OCI-LY7 (cell line): ENCODE measurements at regions of chr14 and their contacts with region 1.

Region 1: DNA sequence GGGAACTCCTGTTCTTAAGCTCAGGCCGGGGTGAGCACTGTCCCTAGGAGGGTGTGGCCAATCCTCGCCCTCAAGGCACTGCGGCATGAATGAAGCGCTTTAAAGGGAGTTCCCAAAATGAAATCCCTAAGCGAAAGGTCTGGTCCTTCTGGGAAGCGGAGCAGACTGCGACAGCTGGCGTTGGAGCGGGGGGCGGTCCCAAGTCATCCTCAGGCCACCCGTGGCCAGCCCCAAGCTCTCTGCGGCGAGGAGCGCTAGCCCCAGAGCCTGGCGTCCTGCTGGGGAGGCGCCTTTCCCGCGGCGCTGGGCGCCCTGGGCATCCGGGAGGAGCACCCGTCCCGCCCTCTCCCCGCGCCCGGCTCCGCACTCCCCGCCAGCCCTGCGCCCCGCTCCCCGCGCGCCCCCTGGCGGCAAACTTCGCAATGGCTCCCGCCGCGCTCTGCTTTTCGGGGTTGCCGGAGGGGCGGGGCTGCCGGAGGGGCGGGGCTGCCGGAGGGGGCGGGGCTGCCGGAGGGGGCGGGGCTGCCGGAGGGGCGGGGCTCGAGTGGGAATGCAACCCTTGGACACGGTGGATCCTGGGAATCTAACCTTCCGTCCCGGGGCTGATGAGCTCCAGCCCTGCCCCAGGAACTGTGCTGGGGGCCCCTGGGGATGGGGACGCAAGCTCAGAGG is 25.4 kb downstream of the ZBTB42 start:
- DNase-seq: peak; percentile 73
- H3K4me3 ChIP-seq: no peak overlapping the region
- H3K27ac ChIP-seq: no peak overlapping the region
- H3K4me1 ChIP-seq: no peaks in the 10 kb centered on the region
- CTCF ChIP-seq: peak; percentile 75

Region 2: DNA sequence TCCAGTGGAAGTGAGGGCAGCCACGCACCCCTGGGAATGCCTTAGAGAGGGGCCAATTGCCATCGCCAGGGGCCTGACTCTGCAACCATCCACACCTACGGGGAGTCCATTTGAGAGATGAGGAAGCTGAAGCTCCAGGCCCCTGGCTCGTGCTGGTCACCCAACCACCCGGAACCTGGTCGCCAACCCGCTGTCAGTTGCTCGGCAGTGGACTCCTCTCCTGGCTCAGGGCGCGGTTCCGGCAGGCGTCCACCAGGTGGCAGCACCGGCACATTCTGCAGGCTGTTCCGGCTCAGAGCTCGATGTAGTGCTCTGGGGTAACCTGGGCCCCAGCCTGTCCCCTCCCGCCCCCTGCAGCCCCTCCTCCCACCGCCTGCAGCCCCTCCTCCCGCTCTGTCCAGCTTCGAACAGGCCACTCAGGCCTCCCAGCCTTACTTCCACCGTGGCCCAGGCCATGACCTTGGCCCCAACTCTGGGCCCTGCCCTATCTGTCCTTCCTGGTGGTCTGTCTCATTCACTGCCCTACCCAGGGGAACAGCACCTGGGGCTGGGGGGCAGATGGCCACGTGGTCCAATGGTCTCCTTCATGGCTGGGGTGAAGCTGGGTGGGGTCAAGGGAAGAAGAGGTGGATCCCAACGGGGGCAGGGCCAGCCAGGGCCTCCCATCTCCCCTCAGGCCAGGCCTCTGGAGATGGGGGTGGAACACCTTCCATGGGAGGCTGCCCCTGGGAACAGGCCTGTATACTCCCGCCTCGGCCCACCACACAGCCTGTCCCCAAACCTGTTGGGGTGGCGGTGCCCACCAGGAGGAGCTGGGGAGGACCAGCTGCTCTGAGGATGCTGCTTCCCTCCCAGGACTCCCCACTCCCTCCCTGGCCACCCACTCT is 57.6 kb before region 1 on chr14:
- CTCF ChIA-PET with region 1: interaction called, 7 read pairs
- POLR2A ChIA-PET with region 1: no interaction called
- intact Hi-C with region 1: loop called (anchors 1 kb)
- DNase-seq: peak; percentile 81
- H3K4me3 ChIP-seq: no peak overlapping the region
- H3K27ac ChIP-seq: no peak overlapping the region
- H3K4me1 ChIP-seq: peaks cover 4% of the 10 kb centered on the region
- CTCF ChIP-seq: peak; percentile 78

Region 3: DNA sequence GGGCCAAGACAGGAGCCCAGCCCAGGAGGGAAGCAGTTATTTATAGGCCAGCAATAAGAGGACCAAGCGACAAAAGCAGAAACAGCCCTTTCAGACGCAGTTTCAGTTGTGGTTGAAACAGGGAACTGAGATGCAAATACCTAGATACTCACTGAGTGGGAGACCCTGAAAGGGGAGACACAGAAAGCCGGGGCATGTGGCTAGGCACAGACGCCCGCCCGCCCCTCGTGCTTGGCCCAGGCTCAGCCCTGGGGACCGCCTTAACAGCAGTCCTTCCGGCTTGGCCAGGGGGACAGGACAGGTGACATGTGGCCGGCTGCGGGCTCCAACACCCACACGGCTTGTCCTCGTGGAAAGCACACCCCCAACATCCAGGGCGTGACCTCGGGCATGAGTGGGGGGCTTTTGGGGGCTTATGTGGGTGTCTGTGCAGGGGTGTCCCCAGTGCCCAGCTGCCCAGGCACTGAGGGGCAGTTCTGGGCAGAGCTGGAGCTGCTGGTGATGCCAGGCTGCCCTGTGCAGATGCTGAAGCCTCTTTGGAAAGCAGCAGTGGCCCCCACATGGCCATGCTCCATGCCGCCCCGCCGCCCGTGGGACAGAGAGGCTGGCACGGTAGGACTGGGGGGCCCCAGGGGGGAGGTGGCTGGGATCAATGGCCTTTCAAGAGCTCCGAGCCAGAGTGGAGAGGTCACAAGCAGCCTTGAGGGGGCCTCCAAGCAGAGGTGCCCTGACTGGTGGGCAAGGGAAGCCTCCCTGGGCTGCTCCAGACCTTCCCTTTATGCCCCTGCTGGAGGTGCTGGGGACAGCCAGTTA is 100.5 kb after region 1 on chr14:
- CTCF ChIA-PET with region 1: no interaction called
- POLR2A ChIA-PET with region 1: no interaction called
- intact Hi-C with region 1: loop called (anchors 2 kb)
- DNase-seq: peak; percentile 91
- H3K4me3 ChIP-seq: peak overlapping the region; percentile 55
- H3K27ac ChIP-seq: no peak overlapping the region
- H3K4me1 ChIP-seq: peaks cover 45% of the 10 kb centered on the region
- CTCF ChIP-seq: no peak; the same call in 1 of the 2 replicates

Region 4: GRCh38 chr14:105290621-105291346 is 464.5 kb after region 1 on chr14:
- CTCF ChIA-PET with region 1: no interaction called
- POLR2A ChIA-PET with region 1: no interaction called
- intact Hi-C with region 1: no loop called
- DNase-seq: no peak
- H3K4me3 ChIP-seq: no peak overlapping the region
- H3K27ac ChIP-seq: no peak overlapping the region
- H3K4me1 ChIP-seq: peaks cover 16% of the 10 kb centered on the region
- CTCF ChIP-seq: no peak